ENCODE measurements at regions of chr1 and their contacts with region 1.

Region 1: DNA sequence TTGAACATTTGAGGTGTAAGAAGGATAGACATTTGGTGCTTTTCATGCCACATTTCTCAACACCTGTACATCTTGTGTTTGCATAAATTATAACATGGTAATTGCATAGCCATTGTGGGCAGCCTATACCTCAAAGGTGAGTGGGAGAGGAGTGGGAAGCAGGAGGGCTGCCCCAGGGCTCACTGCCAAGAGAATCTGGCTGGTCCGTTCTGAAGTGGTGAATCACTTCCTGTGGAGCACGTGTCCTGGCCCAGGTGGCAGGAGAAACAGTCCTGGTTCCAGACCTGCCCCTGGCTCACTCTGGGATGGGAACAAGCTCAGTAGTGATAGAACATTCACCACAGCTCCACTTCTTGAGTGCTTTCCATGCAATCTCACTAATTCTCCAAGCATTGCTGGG is 11.6 kb upstream of the OLFML2B start:
- DNase-seq: no peak
- ATAC-seq: no peak
- H3K4me3 Mint-ChIP-seq: no peak overlapping the region
- H3K27ac Mint-ChIP-seq: no peak overlapping the region
- H3K4me1 Mint-ChIP-seq: peaks cover 4% of the 10 kb centered on the region
- H3K27me3 Mint-ChIP-seq: peaks cover 21% of the 10 kb centered on the region

Region 2: DNA sequence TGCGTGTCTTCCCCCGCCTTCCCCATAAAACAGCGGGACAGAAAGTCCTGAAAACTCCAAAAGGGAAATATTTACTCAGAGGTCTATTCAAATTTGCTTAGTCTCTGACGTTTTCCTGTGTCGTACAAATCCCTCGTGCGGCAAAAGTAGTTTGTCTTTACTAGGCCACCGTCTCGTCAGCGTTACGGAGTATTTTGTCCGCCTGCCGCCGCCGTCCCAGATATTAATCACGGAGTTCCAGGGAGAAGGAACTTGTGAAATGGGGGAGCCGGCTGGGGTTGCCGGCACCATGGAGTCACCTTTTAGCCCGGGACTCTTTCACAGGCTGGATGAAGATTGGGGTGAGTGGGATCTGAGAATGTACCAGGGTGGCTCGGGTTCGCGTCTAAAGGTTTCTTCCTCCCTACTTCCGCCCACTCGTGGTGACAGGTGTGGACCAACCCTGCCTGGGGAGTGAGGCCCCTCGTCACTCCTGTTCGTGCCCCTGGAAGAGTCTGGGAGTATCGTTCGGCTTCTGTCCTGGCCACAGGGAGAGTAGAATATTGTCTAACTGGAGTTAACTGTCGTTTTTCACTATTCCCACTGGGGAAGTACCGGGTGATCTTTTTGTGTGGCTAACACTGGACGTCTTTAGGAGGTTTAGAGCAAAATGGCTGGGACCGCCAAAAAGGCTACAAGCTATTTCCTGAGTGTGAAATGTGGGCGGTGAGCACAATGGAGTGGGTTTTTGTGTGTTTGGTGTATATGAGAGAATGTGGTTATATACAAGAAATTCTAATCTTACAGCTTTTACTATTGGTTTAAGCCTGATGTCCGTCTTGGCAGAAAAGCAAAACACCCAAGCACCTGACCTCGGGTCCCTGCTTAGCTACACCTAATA is 268.9 kb before region 1 on chr1 and contains the start of gene ATF6:
- CTCF ChIA-PET with region 1: interaction called, 35 read pairs
- POLR2A ChIA-PET with region 1: no interaction called
- DNase-seq: peak; percentile 88
- ATAC-seq: peak; percentile 72
- H3K4me3 Mint-ChIP-seq: peak within 1 kb of the TSS; percentile 99
- H3K27ac Mint-ChIP-seq: peak within 1 kb of the TSS; percentile 98
- H3K4me1 Mint-ChIP-seq: peaks cover 43% of the 10 kb centered on the region
- H3K27me3 Mint-ChIP-seq: no peaks in the 10 kb centered on the region
- total RNA-seq, gene ATF6: 15.2 to 17.1 TPM

Region 3: GRCh38 chr1:161864577-161864976 is 170.7 kb before region 1 on chr1:
- CTCF ChIA-PET with region 1: interaction called, 19 read pairs
- POLR2A ChIA-PET with region 1: no interaction called
- DNase-seq: no peak
- ATAC-seq: no peak
- H3K4me3 Mint-ChIP-seq: no peak overlapping the region
- H3K27ac Mint-ChIP-seq: no peak overlapping the region
- H3K4me1 Mint-ChIP-seq: no peaks in the 10 kb centered on the region
- H3K27me3 Mint-ChIP-seq: no peaks in the 10 kb centered on the region

Region 4: DNA sequence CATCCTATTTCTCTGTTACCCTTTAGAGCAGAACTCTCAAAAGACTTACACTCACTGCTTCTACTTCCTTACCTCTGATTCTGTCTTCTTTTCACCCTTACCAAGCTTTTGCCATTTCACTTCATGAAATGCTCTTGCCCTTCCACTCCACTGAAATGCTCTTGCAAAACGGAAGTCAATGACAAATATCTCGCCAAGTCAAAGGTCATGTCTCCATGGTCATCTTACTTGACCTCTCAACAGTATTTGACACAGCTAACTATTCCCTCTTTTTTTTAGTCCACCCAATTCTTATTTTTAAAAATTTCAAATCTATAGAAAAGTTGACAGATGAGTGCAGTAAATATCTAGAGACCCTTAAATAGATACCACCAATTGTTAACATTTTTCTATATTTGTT is 119.3 kb before region 1 on chr1:
- CTCF ChIA-PET with region 1: no interaction called
- POLR2A ChIA-PET with region 1: no interaction called
- DNase-seq: no peak
- ATAC-seq: no peak
- H3K4me3 Mint-ChIP-seq: no peak overlapping the region
- H3K27ac Mint-ChIP-seq: no peak overlapping the region
- H3K4me1 Mint-ChIP-seq: peaks cover 15% of the 10 kb centered on the region
- H3K27me3 Mint-ChIP-seq: no peaks in the 10 kb centered on the region

Region 5: GRCh38 chr1:162023547-162024501 is 11.4 kb before region 1 on chr1 and contains the start of gene OLFML2B:
- CTCF ChIA-PET with region 1: interaction called, 13 read pairs
- POLR2A ChIA-PET with region 1: no interaction called
- DNase-seq: peak; percentile 62
- ATAC-seq: peak; percentile 97
- H3K4me3 Mint-ChIP-seq: peak within 1 kb of the TSS; percentile 80
- H3K27ac Mint-ChIP-seq: no peak within 1 kb of the TSS
- H3K4me1 Mint-ChIP-seq: peaks cover 11% of the 10 kb centered on the region
- H3K27me3 Mint-ChIP-seq: peaks cover 46% of the 10 kb centered on the region
- total RNA-seq, gene OLFML2B: not detected

Region 6: DNA sequence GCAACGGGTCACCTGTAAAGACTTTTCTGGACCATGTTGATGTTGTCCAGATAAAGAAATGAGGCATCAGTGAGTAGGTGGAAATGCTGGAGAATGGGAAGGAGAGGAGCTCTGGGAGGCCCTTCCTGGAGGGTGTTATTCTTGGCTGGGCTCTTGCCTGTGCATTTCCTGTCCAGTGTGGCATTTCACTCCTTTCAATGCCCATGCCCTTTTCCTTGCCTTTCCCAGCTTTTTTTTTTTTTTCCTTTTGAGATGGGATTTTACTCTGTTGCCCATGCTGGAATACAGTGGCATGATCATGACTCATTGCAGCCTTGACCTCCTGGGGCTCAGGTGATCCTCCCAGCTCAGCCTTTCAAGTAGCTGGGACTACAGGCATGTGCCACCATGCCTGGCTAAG is 46.1 kb after region 1 on chr1:
- CTCF ChIA-PET with region 1: no interaction called
- POLR2A ChIA-PET with region 1: no interaction called
- DNase-seq: no peak
- ATAC-seq: no peak
- H3K4me3 Mint-ChIP-seq: no peak overlapping the region
- H3K27ac Mint-ChIP-seq: no peak overlapping the region
- H3K4me1 Mint-ChIP-seq: no peaks in the 10 kb centered on the region
- H3K27me3 Mint-ChIP-seq: peaks cover 20% of the 10 kb centered on the region

Region 7: DNA sequence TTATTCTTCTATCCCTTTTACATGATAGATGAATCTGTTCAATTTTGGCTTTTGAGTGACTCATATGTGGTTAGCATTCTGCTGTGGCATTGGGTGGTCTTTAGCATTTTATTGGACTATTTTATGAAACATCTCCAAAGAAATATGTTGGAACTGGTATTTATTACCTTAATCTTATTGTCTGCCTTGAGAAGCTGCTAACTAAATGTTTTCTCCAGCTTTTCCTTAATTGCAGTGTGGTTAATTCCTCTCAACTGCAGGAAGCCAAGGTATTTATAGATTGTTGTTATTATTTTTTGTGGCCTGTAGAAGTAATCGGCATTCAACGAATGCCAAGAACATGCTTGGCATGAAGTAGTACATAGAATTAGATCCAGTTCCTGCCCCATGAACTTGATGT is 98.3 kb after region 1 on chr1:
- CTCF ChIA-PET with region 1: no interaction called
- POLR2A ChIA-PET with region 1: no interaction called
- DNase-seq: no peak
- ATAC-seq: no peak
- H3K4me3 Mint-ChIP-seq: no peak overlapping the region
- H3K27ac Mint-ChIP-seq: no peak overlapping the region
- H3K4me1 Mint-ChIP-seq: peaks cover 3% of the 10 kb centered on the region
- H3K27me3 Mint-ChIP-seq: peaks cover 26% of the 10 kb centered on the region

Measured in activated CD8-positive, alpha-beta T cell treated with anti-CD3 and anti-CD28 coated beads, Interleukin-2, amount 10 ng/mL, durations not matched to agents 7 days and 5 days (primary cell).